ENCODE measurements at regions of chr7 and their contacts with region 1.

Region 1: GRCh38 chr7:44072364-44073231 is 7.2 kb upstream of the PGAM2 start:
- DNase-seq: peak; percentile 72 to 96 (median 91)
- H3K4me3 ChIP-seq: no peak overlapping the region
- H3K27ac ChIP-seq: peak overlapping the region in 3 of 5 donors; percentile 43 to 87 (median 70)
- H3K4me1 ChIP-seq: peaks cover 5 to 15% of the 10 kb centered on the region in 2 donors
- H3K27me3 ChIP-seq: no peaks in the 10 kb centered on the region
- CTCF ChIP-seq: peak; percentile 64 to 79 (median 69)
- POLR2A ChIP-seq: no peak

Region 2: DNA sequence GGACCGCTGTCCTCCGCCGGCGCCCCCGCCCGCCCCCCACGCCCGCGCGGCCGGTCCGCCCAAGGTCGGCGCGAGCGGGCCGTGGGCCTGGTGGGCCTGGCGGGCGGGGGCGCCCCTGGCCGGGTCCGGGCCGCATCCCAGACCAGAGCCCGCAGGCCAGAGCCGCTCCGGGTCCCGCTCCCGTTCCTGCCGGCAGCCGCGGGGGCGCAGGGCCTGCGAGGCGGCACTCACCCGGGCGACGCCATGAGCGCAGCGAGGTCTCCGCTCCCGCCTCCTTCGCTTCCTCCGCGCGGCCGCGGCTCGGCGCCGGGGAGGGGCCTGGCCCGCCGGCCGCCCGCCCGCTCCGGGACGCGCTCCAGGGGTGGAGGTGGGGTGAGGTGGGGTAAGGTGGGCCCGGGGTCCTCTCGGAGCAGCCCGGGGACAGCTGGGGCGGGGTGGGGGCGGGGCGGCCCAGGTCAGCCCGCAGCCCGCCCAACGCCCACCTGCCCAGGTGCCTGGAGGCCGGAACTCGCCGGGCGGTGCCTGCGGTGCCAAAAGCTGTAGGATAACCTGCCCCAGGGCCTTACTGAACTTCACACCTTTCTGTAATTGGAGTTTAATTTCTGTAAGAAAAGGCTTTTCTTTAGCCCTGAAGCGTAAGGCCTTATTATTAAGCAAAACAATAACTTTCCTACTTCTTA is 166.1 kb before region 1 on chr7 and contains the start of gene URGCP:
- intact Hi-C with region 1: no loop called
- DNase-seq: peak in 6 of 7 donors; percentile 28 to 60 (median 46)
- H3K4me3 ChIP-seq: peak within 1 kb of the TSS in 3 of 4 donors; percentile 9 to 92 (median 46)
- H3K27ac ChIP-seq: peak within 1 kb of the TSS; percentile 71 to 98 (median 94)
- H3K4me1 ChIP-seq: peaks cover 27 to 32% of the 10 kb centered on the region in 2 donors
- H3K27me3 ChIP-seq: no peaks in the 10 kb centered on the region
- CTCF ChIP-seq: no peak
- POLR2A ChIP-seq: no peak
- total RNA-seq, gene URGCP: 53.8 to 103 (median 68.9) TPM

Region 3: GRCh38 chr7:43931346-43931745 is 141.3 kb before region 1 on chr7:
- intact Hi-C with region 1: no loop called
- DNase-seq: peak in 1 of 7 donors; percentile 0
- H3K4me3 ChIP-seq: no peak overlapping the region
- H3K27ac ChIP-seq: no peak overlapping the region
- H3K4me1 ChIP-seq: peaks cover 0 to 8% of the 10 kb centered on the region in 2 donors
- H3K27me3 ChIP-seq: no peaks in the 10 kb centered on the region
- CTCF ChIP-seq: no peak
- POLR2A ChIP-seq: no peak

Region 4: DNA sequence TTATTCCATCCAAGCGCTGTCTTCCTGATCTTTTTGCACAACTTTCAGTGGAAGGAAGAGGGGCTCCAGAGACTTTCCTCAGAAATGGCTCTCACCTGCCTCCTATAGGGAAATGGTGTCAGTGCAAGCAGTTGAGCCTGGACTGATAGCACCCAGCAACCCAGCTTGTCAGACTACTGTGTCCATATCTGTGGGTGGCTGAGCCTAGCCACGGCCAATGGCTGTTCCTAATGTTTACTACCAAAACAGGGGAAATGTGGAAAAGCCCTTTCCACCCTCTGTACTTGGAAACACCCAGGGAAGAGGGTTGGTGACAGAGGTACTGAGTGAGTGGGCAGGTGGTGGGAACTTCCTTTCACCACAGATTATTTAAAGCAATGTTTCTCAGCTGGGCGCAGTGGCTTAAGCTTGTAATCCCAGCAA is 123.9 kb after region 1 on chr7:
- intact Hi-C with region 1: loop called in 1 of 2 experiments (anchors 10 kb)
- DNase-seq: peak in 5 of 7 donors; percentile 35 to 69 (median 56)
- H3K4me3 ChIP-seq: no peak overlapping the region
- H3K27ac ChIP-seq: no peak overlapping the region
- H3K4me1 ChIP-seq: peaks cover under 1% of the 10 kb centered on the region in 2 donors
- H3K27me3 ChIP-seq: peaks cover 2% of the 10 kb centered on the region
- CTCF ChIP-seq: peak; percentile 32 to 68 (median 60)
- POLR2A ChIP-seq: no peak

Measured in adrenal gland (tissue), 19 donors.